HEK293 (cell line): ENCODE measurements at regions of chr2 and their contacts with region 1.

Region 1: GRCh38 chr2:157876066-157876787 is at the start of gene ACVR1:
- H3K4me3 ChIP-seq: peak within 1 kb of the TSS; percentile 91
- H3K27ac ChIP-seq: peak within 1 kb of the TSS; percentile 84
- H3K4me1 ChIP-seq: peaks cover 3% of the 10 kb centered on the region
- CTCF ChIP-seq: peak; percentile 57; the same call in 1 of the 2 replicates

Region 2: GRCh38 chr2:157698430-157698829 is 177.8 kb before region 1 on chr2:
- CTCF ChIA-PET with region 1: no interaction called
- POLR2A ChIA-PET with region 1: no interaction called
- H3K4me3 ChIP-seq: no peak overlapping the region
- H3K27ac ChIP-seq: no peak overlapping the region
- H3K4me1 ChIP-seq: no peaks in the 10 kb centered on the region
- CTCF ChIP-seq: no peak

Region 3: GRCh38 chr2:157838442-157839161 is 37.6 kb before region 1 on chr2:
- CTCF ChIA-PET with region 1: interaction called, 4 read pairs
- POLR2A ChIA-PET with region 1: interaction called, 23 read pairs
- H3K4me3 ChIP-seq: no peak overlapping the region; the same call in 1 of the 2 replicates
- H3K27ac ChIP-seq: peak overlapping the region; percentile 48
- H3K4me1 ChIP-seq: peaks cover 11% of the 10 kb centered on the region
- CTCF ChIP-seq: no peak

Region 4: DNA sequence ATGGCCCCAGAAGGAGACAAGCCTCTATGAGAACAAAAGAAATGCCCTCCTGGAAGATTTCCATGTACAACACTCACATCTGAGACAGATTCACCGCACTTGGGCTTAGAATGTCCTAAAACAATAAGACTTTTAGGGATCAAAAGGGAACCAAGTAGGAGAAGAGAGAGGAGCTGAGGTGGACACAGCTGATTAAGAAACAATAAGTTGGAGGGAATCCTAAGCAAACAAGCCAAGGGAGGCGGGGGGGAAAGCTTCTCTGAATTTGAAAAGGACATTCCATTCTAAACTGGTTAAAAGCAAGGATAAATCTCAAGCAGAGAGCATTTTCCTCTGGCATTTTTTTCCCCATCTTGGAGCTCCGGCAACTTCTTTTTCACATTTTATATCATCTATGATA is 10.0 kb before region 1 on chr2:
- CTCF ChIA-PET with region 1: no interaction called
- POLR2A ChIA-PET with region 1: interaction called, 12 read pairs
- H3K4me3 ChIP-seq: no peak overlapping the region
- H3K27ac ChIP-seq: no peak overlapping the region
- H3K4me1 ChIP-seq: peaks cover 13% of the 10 kb centered on the region
- CTCF ChIP-seq: no peak

Region 5: DNA sequence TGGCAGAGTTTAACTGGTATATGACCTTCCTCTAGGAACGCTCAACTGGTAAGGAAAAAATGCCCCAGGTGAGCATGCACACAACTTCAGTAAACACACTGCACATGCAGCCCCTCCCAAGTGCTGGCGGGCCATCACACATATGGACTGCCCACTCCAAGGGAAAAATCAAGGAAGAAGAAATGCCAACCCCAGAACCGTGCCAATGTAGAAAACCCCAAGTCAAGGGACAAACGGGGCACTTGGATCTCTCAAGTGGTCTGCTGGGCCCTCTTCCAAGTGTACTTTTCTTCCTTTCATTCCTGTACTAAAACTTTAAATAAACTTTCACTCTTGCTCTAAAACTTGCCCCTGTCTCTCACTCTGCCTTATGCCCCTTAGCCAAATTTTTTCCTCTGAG is 76.3 kb after region 1 on chr2:
- CTCF ChIA-PET with region 1: no interaction called
- POLR2A ChIA-PET with region 1: no interaction called
- H3K4me3 ChIP-seq: no peak overlapping the region
- H3K27ac ChIP-seq: no peak overlapping the region
- H3K4me1 ChIP-seq: no peaks in the 10 kb centered on the region
- CTCF ChIP-seq: no peak